B cell (primary cell): ENCODE measurements at regions of chr13 and their contacts with region 1.

Region 1: GRCh38 chr13:41905600-41906254 is 55.2 kb downstream of the VWA8 start:
- DNase-seq: peak; percentile 24
- ATAC-seq: peak; percentile 51
- H3K4me3 ChIP-seq: no peak overlapping the region
- H3K4me3 Mint-ChIP-seq: no peak overlapping the region
- H3K27ac ChIP-seq: no peak overlapping the region
- H3K27ac Mint-ChIP-seq: no peak overlapping the region
- H3K4me1 ChIP-seq: no peaks in the 10 kb centered on the region
- H3K4me1 Mint-ChIP-seq: no peaks in the 10 kb centered on the region
- H3K27me3 ChIP-seq: no peaks in the 10 kb centered on the region
- H3K27me3 Mint-ChIP-seq: no peaks in the 10 kb centered on the region
- CTCF ChIP-seq: peak; percentile 64

Region 2: DNA sequence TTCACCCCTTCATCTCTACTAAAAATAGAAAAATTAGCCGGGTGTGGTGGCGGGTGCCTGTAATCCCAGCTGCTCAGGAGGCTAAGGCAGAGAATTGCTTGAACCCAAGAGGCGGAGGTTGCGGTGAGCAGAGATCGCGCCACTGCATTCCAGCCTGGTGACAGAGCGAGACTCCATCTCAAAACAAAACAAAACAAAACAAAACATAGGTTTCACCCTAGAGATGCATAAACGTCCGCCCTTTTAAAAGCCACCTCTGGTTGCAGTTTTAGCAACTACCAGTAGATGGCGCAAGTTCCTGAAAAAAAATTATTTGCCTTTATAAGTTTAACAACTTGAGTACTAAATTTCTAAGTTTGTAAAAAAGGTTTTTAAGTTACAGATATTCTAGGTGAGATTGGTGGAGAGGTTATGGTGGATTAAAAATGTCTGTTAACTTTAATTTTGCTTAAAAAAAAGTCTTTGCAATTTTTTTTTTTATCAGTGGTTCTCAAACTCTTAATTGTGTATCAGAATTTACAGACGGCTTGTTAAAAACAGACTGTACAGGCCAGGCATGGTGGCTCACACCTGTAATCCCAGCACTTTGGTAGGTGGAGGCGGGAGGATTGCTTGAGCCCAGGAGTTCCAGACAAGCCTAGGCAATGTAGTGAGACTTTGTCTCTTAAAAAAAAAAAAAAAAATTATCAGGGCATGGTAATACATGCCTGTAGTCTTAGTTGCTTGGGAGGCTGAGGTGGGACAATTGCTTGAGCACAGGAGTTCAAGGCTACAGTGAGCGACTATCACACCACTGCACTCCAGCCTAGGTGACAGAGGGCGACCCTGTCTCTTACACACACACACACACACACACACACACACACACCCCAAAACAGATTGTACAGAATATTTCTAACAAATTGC is 552.5 kb before region 1 on chr13:
- CTCF ChIA-PET with region 1: no interaction called
- POLR2A ChIA-PET with region 1: no interaction called
- intact Hi-C with region 1: loop called (anchors 10 kb)
- DNase-seq: peak; percentile 69
- ATAC-seq: peak; percentile 53
- H3K4me3 ChIP-seq: no peak overlapping the region
- H3K4me3 Mint-ChIP-seq: no peak overlapping the region
- H3K27ac ChIP-seq: no peak overlapping the region
- H3K27ac Mint-ChIP-seq: no peak overlapping the region
- H3K4me1 ChIP-seq: no peaks in the 10 kb centered on the region
- H3K4me1 Mint-ChIP-seq: peaks cover 4% of the 10 kb centered on the region
- H3K27me3 ChIP-seq: no peaks in the 10 kb centered on the region
- H3K27me3 Mint-ChIP-seq: no peaks in the 10 kb centered on the region
- CTCF ChIP-seq: peak; percentile 94

Region 3: DNA sequence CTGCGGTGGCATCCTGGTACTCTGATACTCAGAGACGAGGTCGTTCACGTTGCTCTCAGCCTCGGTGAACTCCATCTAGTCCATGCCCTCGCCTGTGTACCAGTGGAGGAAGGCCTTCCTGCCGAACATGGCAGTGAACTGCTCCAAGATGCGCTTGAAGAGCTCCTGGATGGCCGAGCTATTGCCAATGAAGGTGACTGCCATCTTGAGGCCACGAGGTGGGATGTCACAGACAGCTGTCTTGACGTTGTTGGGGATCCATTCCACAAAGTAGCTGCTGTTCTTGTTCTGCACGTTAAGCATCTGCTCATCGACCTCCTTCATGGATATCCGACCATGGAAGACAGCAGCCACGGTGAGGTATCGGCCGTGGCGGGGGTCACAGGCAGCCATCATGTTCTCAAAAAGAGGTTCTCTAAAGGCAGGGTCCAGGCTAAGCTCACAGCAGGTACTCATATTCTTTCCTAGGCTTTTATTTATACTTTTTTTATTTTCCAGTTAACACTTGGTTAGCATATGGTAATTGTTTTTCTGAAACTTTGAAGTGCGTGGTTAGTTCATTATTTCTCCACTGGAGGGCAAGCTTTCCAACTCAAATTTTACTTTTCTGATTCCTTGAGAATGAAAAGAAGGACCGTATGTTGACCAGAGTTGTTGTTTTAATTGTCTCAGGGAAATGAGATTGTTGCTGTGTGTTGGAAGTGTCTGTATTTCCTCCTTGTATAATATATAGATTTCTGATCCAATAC is 520.8 kb before region 1 on chr13:
- CTCF ChIA-PET with region 1: no interaction called
- POLR2A ChIA-PET with region 1: no interaction called
- intact Hi-C with region 1: no loop called
- DNase-seq: no peak
- ATAC-seq: no peak
- H3K4me3 ChIP-seq: no peak overlapping the region
- H3K4me3 Mint-ChIP-seq: no peak overlapping the region
- H3K27ac ChIP-seq: no peak overlapping the region
- H3K27ac Mint-ChIP-seq: no peak overlapping the region
- H3K4me1 ChIP-seq: no peaks in the 10 kb centered on the region
- H3K4me1 Mint-ChIP-seq: no peaks in the 10 kb centered on the region
- H3K27me3 ChIP-seq: peaks cover 0 to 4% (median 1%) of the 10 kb centered on the region in 4 experiments
- H3K27me3 Mint-ChIP-seq: peaks cover 19% of the 10 kb centered on the region
- CTCF ChIP-seq: no peak

Region 4: DNA sequence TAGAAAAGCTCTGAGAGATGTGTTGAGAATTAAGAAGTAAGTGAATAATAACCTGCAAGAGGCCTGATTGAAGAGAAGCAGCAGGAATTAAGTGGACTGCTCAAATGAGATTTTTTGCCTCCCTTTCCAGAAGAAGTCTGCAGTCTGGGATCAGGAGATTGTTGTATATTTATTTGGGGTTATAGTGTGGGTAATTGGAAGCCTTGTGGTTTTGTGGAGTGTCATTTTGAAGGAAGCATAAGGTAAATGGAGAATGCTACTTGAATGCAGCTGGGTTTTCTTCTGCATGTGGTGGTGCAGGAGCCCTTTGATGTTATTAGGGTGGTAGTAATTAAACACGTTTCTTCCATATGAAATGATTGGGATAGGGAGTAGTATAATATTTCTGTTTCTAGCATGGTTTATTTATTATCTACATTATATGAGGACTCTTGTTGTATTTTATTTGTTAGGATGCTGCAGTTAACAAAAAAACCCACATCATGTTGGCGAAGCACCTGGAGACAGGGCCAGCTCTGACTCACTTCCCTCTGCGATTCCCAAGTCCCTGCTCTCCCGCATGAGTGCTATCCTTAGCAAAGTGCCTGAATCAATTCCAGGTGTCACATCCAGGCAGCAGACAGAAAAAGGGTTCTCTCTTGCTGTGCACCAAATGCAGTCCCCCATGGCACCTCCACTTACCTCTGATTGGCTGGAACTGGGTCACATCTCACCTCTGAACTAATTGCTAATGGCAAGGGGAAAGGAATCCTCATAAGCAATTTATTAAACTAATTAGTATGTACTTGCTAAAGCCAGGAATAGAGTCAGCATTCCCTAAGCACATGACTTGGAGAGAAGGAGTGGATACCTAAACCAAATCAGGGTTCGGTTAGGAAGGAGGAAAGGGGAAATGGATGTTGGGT is 197.5 kb after region 1 on chr13:
- CTCF ChIA-PET with region 1: no interaction called
- POLR2A ChIA-PET with region 1: no interaction called
- intact Hi-C with region 1: no loop called
- DNase-seq: no peak
- ATAC-seq: no peak
- H3K4me3 ChIP-seq: no peak overlapping the region
- H3K4me3 Mint-ChIP-seq: no peak overlapping the region
- H3K27ac ChIP-seq: no peak overlapping the region
- H3K27ac Mint-ChIP-seq: no peak overlapping the region
- H3K4me1 ChIP-seq: no peaks in the 10 kb centered on the region
- H3K4me1 Mint-ChIP-seq: no peaks in the 10 kb centered on the region
- H3K27me3 ChIP-seq: no peaks in the 10 kb centered on the region
- H3K27me3 Mint-ChIP-seq: no peaks in the 10 kb centered on the region
- CTCF ChIP-seq: no peak